ENCODE measurements at regions of chr12 and their contacts with region 1.

Region 1: DNA sequence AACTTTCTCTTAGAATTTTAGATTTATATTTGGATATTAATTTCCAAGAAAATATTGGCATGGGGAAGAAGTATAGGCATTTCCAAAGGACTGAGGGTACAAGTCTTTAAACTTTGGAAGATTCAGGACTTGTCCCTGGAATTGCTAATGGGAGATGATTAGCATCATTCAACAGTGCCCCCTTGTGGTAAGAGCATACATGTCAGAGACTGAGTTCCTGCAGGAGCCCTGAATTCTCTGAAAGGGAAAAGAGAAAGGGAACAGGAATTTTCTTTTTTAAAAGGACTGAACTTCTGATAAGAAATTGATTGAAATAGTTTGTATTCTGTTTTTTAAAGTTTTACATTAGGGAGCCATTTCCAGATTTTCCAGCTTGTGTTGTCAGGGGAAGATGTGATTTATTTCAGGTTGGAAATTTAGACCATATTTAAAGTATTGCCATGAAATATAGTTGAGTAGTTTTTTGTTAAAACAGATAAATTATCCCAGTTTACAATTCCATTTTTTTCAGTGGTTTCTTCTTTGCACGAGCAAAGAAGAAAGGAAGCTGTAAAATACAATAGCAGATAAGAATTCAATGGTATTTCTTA is 44.0 kb upstream of the REP15 start:
- DNase-seq: peak; percentile 69
- H3K4me3 ChIP-seq: no peak overlapping the region
- H3K27ac ChIP-seq: no peak overlapping the region
- H3K4me1 ChIP-seq: no peaks in the 10 kb centered on the region
- CTCF ChIP-seq: peak; percentile 99

Region 2: GRCh38 chr12:27427815-27428214 is 224.5 kb before region 1 on chr12:
- CTCF ChIA-PET with region 1: no interaction called
- POLR2A ChIA-PET with region 1: no interaction called
- intact Hi-C with region 1: loop called (anchors 2 kb)
- DNase-seq: no peak
- H3K4me3 ChIP-seq: no peak overlapping the region
- H3K27ac ChIP-seq: no peak overlapping the region
- H3K4me1 ChIP-seq: no peaks in the 10 kb centered on the region
- CTCF ChIP-seq: no peak

Region 3: DNA sequence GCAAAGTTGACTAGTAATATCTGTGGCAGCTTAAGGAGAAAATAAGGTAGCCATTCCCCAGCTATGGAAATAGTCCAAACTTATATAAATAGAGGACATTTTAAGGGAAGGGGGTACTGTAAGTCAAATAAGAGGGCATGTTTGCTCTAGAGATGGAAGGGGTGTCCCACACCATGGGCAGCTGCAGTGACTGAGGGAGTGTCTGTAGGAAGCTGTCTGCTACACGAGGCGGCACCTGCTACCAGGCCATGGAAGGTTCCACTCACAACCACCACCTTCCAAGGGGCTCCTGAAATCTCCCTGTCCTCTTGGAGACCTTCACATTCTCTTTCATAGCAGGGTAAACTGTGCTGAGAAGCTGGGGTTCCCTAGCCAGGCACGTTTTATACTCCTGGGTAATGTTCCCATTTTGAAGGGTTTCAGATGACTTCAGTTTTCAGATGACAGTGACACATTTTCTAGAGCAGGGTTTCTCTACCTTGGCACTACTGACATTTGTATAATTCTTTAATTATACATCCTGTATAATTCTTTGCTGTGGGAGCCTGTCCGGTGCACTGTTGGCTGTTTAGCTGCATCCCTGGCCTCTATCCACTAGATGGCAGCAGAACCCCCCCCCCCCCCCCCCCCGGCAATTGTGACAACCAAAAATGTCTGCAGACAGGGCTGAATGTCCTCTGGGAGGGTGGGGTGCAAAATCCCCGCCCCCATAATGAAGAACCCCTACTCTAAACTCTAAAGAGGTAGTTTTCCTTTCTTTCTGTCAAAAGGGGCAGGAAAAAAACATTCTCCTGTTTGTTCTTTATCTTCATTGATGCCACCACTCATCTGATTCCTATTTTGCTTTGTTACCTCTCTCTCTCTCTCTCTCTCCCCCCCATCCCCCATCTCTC is 217.3 kb before region 1 on chr12:
- CTCF ChIA-PET with region 1: no interaction called
- POLR2A ChIA-PET with region 1: no interaction called
- intact Hi-C with region 1: loop called (anchors 2 kb)
- DNase-seq: peak; percentile 34
- H3K4me3 ChIP-seq: no peak overlapping the region
- H3K27ac ChIP-seq: no peak overlapping the region
- H3K4me1 ChIP-seq: peaks cover 17% of the 10 kb centered on the region
- CTCF ChIP-seq: peak; percentile 78

Region 4: DNA sequence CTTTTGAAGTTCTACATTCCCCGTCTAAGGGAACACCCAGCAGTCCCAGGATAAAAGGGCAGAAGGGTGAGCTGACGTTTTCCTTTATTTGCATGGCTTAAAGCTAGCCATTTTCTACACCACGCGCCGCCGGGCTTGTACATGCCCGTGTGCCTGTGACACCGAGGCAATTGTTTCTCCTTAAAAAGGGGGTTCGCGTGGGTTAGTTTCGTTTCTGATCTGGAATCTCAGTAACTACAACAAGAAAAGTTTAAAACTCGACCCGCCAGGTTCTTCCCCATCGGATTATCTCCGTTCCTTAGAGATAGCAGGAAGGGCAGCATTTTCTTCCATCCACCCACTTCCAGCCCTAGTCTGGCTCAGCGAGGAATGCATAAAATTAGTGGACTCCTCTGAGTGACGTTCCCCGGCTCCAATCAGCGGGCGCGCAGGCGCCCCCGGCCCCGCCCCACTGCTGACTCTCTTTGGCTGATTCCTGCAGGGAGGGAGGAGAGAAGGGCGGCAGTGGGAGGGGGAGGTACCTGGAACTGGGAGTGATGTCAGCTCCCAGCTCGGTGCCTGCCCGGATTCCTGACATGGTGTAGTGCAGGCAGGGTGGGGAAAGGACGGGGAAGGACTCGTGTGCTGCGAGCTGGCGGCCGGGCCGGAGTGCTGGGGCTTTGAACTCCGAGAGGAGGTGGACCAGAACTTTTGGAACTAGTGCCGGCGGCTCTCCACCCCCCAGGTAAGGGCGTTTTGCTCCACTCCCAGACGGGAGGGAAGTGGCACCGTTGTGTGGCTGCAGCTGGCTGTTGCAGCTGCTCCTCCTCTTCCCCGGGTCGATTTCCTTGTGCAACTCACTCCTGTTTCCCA is 128.4 kb before region 1 on chr12 and contains the start of gene PPFIBP1:
- CTCF ChIA-PET with region 1: no interaction called
- POLR2A ChIA-PET with region 1: no interaction called
- intact Hi-C with region 1: loop called (anchors 2 kb)
- DNase-seq: peak; percentile 91
- H3K4me3 ChIP-seq: peak within 1 kb of the TSS; percentile 88
- H3K27ac ChIP-seq: peak within 1 kb of the TSS; percentile 22
- H3K4me1 ChIP-seq: peaks cover 18% of the 10 kb centered on the region
- CTCF ChIP-seq: no peak
- total RNA-seq, gene PPFIBP1: 7.3 and 12.7 TPM in 2 replicates

Region 5: GRCh38 chr12:27703710-27704452 is 51.6 kb after region 1 on chr12:
- CTCF ChIA-PET with region 1: no interaction called
- POLR2A ChIA-PET with region 1: no interaction called
- intact Hi-C with region 1: loop called (anchors 1 kb)
- DNase-seq: peak; percentile 77
- H3K4me3 ChIP-seq: no peak overlapping the region
- H3K27ac ChIP-seq: no peak overlapping the region
- H3K4me1 ChIP-seq: no peaks in the 10 kb centered on the region
- CTCF ChIP-seq: peak; percentile 98

Measured in OCI-LY7 (cell line).